Aorta (tissue), 5 donors: ENCODE measurements at regions of chr1 and their contacts with region 1.

Region 1: DNA sequence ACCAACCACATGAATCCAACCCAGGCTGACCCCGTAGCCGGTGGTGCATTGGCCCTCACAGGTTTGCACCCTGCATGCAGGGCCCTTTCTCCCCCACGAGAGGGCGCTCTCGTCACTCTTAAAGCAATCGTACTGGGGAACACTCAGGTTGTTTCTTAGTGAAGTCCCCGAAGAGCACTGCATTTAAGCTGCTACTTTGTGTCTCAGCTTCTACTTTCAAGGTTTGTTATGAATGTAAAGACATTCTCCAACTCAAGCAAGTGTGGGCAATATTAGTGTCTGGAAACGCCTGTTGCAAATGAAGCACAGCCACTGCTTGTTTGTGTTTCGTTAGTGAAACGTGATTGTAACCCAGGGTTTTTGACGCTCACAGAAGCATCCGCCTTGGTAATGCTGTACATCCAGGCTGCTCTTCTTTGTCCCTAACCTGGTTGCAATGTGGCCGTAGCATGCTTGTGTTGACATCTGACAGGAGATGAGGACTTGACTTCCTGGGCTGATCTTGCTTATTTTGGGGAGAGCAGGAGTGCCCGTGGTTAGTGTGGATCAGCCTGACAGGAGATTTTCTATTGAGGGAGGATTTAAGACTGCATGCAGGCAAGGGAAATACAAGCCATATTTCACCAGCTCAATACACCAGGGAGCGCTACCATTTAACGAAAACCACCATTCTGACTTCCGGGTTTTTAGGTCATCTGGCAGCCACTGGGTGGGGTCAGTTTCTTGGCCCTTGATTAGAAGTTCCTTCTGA is 79.8 kb downstream of the ST6GALNAC3 start:
- DNase-seq: peak; percentile 84 to 92
- ATAC-seq: peak; percentile 90
- H3K4me3 ChIP-seq: peak overlapping the region; percentile 37 to 41
- H3K27ac ChIP-seq: peak overlapping the region in 1 of 2 donors; percentile 36
- H3K4me1 ChIP-seq: no peaks in the 10 kb centered on the region
- H3K27me3 ChIP-seq: no peaks in the 10 kb centered on the region

Region 2: DNA sequence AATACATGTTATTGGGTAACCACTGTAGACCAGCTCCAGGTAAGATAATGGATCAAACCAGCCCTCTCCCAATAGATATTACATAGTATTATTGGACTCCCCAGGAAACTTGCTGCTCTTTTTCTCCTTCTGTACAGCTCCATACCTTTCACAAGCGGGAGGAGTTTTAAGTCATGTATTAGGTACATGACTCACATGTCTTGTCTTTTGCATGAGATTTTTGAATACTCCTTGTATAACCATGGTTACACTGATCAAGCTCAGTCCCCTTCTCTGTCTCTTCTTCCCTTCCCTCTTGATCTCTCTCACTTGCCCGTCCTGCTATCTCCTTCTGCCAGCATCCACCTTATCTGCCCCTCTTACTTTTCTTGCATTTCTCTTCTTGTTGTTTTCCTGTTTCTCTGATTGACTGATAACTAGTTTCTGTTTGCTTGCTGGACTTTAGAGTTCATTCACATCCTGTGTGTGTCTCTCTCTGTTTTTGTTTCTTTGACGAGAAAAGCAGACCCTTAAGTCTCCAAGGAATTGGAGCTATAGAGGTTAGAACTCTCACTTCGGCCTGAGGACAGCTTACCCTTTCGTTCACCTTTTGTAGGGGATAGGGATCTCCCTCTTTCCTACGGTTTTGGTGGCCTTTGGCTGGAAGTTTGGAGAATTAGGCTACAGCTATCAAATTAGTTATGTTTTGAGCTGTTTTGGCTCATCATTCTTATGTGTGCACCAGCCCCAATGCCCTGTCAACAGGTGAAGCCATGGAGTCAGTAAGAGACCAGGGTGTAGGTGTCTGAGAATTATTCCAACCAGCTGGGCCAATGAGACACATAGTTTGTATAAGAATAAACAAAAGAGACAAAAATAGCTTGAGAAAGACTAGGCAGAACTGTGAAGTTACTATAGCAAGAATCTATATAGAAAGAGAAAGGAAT is 173.1 kb before region 1 on chr1:
- intact Hi-C with region 1: no loop called
- DNase-seq: no peak
- ATAC-seq: no peak
- H3K4me3 ChIP-seq: no peak overlapping the region
- H3K27ac ChIP-seq: no peak overlapping the region
- H3K4me1 ChIP-seq: no peaks in the 10 kb centered on the region
- H3K27me3 ChIP-seq: no peaks in the 10 kb centered on the region

Region 3: GRCh38 chr1:76330991-76331603 is 176.7 kb after region 1 on chr1:
- intact Hi-C with region 1: loop called in 1 of 2 experiments (anchors 10 kb)
- DNase-seq: no peak
- ATAC-seq: peak; percentile 71
- H3K4me3 ChIP-seq: no peak overlapping the region
- H3K27ac ChIP-seq: no peak overlapping the region
- H3K4me1 ChIP-seq: peaks cover 0 to 3% of the 10 kb centered on the region in 2 donors
- H3K27me3 ChIP-seq: no peaks in the 10 kb centered on the region

Region 4: DNA sequence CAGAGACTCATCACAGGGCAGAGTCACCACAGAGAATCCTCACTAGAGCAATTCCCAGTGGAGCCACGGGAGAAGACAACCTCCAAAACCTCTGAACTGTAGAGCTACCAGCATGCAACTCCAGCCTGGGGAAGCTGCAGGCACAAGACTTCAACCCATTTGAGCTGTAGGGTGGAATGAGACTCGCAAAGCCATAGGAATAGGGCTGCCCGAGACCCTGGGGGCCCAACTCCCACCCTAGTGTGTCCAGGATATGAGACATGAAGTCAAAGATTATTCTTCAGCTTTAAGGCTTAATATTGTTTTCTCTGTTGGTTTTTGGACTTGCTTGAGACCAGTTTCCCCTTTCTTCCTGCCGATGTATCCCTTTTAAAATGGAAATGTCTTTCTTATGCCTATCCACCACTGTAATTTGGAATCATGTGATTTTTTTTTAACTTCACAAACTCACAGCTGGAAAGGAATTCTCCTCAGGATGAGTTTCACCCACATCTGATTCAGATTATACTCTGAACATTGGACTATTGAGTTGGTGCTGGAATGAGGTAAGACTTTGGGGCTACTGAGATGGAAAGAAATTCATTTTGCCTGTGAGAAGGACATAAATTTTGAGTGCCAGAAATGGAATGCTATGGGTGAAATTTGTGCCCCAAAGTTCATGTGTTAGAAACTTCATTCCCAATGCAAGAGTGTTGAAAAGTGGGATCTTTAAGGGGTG is 653.3 kb after region 1 on chr1:
- intact Hi-C with region 1: loop called in 1 of 2 experiments (anchors 5 kb)
- DNase-seq: no peak
- ATAC-seq: no peak
- H3K4me3 ChIP-seq: no peak overlapping the region
- H3K27ac ChIP-seq: no peak overlapping the region
- H3K4me1 ChIP-seq: no peaks in the 10 kb centered on the region
- H3K27me3 ChIP-seq: no peaks in the 10 kb centered on the region

Region 5: DNA sequence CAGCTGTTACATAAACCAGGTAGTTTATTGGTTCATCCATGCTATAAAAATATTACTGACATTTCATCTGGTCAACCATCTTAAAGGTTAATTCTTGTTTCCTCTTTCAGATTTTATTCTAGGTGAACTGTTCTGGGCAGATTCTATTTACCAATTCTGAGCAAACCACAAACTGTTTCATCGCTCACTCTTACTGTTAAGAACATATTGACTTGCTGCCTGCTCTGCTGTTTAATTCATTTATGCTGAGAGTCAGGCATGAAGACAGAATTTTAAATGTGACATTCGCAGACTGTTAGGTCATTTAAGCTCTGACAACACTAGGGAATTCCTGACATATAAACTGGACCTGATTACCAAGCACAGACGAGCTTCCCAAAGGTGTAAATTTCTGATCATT is 966.6 kb after region 1 on chr1:
- intact Hi-C with region 1: loop called (anchors 2 to 5 kb)
- DNase-seq: no peak
- ATAC-seq: no peak
- H3K4me3 ChIP-seq: no peak overlapping the region
- H3K27ac ChIP-seq: no peak overlapping the region
- H3K4me1 ChIP-seq: no peaks in the 10 kb centered on the region
- H3K27me3 ChIP-seq: no peaks in the 10 kb centered on the region

Region 6: GRCh38 chr1:77126307-77126706 is 971.9 kb after region 1 on chr1:
- intact Hi-C with region 1: loop called (anchors 2 to 5 kb)
- DNase-seq: no peak
- ATAC-seq: no peak
- H3K4me3 ChIP-seq: no peak overlapping the region
- H3K27ac ChIP-seq: no peak overlapping the region
- H3K4me1 ChIP-seq: no peaks in the 10 kb centered on the region
- H3K27me3 ChIP-seq: no peaks in the 10 kb centered on the region

Region 7: DNA sequence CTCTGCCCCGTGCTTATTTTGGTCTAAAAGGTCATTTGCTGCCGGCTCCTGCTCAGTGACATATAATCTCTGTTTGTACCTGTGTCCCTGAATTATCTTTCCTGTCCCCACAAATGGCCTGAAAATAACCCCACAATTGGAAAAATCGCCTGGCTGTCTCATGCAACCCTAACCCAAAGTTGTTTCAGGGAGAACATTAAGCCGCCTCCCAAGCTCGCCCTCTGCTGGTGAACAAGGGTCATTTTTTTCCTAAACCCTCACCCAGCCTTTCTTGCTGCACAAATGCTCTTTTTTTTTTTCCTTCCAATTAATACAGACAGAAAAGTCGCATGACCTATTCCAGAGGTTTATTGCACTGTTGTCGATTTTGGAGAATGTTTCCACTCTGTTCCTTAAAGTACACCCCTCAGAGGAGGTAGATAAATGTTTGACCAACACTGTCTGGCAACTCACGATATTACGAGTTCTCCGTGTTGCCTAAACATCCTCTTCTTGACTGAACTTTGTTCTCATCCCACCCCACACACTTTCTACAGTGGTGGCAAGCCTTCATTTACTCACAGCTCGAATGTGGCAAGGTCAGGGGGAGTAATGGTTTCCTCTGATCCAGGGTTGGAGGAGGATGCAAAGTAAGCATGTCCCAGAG is 1379.4 kb after region 1 on chr1:
- intact Hi-C with region 1: loop called in 1 of 2 experiments (anchors 10 kb)
- DNase-seq: peak in 1 of 2 donors; percentile 56
- ATAC-seq: peak; percentile 69
- H3K4me3 ChIP-seq: no peak overlapping the region
- H3K27ac ChIP-seq: no peak overlapping the region
- H3K4me1 ChIP-seq: no peaks in the 10 kb centered on the region
- H3K27me3 ChIP-seq: no peaks in the 10 kb centered on the region